Tibial artery (tissue), 4 donors: ENCODE measurements at regions of chr12 and their contacts with region 1.

Region 1: GRCh38 chr12:2179953-2180736 is 127.4 kb downstream of the CACNA1C start:
- DNase-seq: peak; percentile 84 to 93
- H3K4me3 ChIP-seq: no peak overlapping the region
- H3K27ac ChIP-seq: peak overlapping the region; percentile 66 to 76
- H3K4me1 ChIP-seq: peaks cover 3 to 68% (median 41%) of the 10 kb centered on the region in 4 donors
- H3K27me3 ChIP-seq: no peaks in the 10 kb centered on the region
- CTCF ChIP-seq: no peak

Region 2: GRCh38 chr12:2225696-2226095 is 45.6 kb after region 1 on chr12:
- intact Hi-C with region 1: no loop called
- DNase-seq: no peak
- H3K4me3 ChIP-seq: no peak overlapping the region
- H3K27ac ChIP-seq: no peak overlapping the region
- H3K4me1 ChIP-seq: peaks cover 0 to 21% (median 2%) of the 10 kb centered on the region in 4 donors
- H3K27me3 ChIP-seq: no peaks in the 10 kb centered on the region
- CTCF ChIP-seq: no peak

Region 3: DNA sequence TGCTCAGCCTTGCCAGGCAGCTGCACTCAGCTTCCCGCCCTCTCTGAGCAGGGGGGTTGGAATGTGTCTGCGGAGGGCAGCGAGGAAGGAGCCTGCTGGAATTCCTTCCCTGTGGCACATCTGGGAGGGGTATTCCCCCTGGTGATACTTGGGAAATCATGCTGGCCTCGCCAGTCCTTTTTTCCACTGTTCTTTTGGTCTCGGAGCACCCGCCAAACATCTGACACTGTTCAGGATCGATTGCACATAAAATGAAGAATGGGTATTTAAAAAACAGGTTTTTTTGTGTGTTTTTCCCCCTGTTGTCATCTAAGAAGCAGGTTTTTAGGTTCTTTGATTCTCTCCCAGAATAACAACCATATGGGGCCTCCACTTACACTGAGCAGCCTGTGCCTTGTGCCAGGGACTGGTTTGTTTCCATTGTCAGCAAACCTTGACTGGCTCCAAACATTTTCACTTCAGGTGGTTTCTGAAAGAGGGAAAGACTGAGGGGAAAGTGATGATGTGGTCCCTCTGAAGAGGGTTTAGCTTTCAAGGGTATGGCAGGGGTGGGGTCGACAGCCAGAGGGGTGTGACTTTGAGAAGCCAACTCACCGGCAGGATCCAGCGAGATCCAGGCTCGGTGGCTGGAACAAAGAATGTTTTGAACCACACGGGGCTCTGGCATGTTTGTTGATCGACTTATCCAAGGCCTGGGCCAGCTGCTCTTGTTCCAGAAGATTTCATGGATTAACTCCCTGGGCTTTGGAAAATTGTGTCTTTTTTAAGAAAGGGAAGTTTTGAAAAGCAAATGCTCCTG is 87.8 kb after region 1 on chr12:
- intact Hi-C with region 1: loop called (anchors 10 kb)
- DNase-seq: peak; percentile 67 to 84
- H3K4me3 ChIP-seq: no peak overlapping the region
- H3K27ac ChIP-seq: peak overlapping the region; percentile 66 to 73
- H3K4me1 ChIP-seq: peaks cover 0 to 80% (median 54%) of the 10 kb centered on the region in 4 donors
- H3K27me3 ChIP-seq: no peaks in the 10 kb centered on the region
- CTCF ChIP-seq: no peak